Adrenal gland (tissue), 19 donors: ENCODE measurements at regions of chr17 and their contacts with region 1.

Region 1: GRCh38 chr17:19992803-19993713 is 15.4 kb upstream of the AKAP10 start:
- DNase-seq: peak; percentile 82 to 96 (median 91)
- H3K4me3 ChIP-seq: no peak overlapping the region
- H3K27ac ChIP-seq: no peak overlapping the region
- H3K4me1 ChIP-seq: peaks cover 0 to 4% of the 10 kb centered on the region in 2 donors
- H3K27me3 ChIP-seq: peaks cover 3% of the 10 kb centered on the region
- CTCF ChIP-seq: peak; percentile 62 to 89 (median 81)
- POLR2A ChIP-seq: no peak

Region 2: DNA sequence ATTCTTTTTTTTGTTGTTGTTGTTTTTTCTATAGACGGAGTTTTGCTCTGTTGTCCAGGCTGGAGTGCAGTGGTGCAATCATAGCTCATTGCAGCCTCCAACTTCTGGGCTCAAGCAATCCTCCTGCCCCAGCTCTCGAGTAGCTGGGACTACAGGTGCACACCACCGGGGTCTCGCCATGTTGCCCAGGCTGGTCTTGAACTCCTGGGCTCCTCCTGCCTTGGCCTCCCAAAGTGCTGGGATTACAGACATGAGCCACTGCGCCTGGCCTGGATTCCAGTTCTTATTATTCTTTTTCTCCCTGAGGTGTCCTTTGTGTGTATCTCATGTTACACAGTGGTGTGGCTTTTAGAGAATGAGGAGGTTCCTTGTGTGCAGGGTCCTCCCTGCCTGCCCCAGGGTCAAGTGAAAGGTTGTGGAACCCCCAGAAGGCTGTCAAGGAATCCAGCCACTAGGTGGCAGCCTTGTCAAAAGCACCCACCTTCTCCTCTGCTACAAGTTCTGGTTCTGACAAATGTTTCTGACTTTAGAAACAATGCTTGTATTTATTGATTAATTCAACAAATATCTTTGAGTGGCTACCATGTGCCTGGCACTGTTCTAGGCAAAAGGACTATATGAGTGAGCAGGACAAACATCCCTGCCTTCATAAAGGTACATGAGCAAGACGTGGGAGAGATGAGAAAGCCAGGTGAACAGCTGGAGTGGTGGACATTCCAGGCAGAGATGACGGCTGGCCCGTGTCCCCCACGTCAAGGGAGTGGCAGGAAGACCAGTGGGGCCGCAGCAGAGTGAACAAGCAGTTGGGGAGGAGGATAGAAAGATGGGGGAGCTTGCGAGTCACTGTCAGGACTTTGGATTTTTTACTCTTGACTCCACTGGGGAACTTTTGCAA is 128.5 kb after region 1 on chr17:
- intact Hi-C with region 1: loop called in 1 of 2 experiments (anchors 5 kb)
- DNase-seq: peak; percentile 48 to 80 (median 67)
- H3K4me3 ChIP-seq: no peak overlapping the region
- H3K27ac ChIP-seq: no peak overlapping the region
- H3K4me1 ChIP-seq: peaks cover 0 to 7% of the 10 kb centered on the region in 2 donors
- H3K27me3 ChIP-seq: no peaks in the 10 kb centered on the region
- CTCF ChIP-seq: peak; percentile 78 to 93 (median 84)
- POLR2A ChIP-seq: no peak